Mammary epithelial cell (primary cell): ENCODE measurements at regions of chr16 and their contacts with region 1.

Region 1: DNA sequence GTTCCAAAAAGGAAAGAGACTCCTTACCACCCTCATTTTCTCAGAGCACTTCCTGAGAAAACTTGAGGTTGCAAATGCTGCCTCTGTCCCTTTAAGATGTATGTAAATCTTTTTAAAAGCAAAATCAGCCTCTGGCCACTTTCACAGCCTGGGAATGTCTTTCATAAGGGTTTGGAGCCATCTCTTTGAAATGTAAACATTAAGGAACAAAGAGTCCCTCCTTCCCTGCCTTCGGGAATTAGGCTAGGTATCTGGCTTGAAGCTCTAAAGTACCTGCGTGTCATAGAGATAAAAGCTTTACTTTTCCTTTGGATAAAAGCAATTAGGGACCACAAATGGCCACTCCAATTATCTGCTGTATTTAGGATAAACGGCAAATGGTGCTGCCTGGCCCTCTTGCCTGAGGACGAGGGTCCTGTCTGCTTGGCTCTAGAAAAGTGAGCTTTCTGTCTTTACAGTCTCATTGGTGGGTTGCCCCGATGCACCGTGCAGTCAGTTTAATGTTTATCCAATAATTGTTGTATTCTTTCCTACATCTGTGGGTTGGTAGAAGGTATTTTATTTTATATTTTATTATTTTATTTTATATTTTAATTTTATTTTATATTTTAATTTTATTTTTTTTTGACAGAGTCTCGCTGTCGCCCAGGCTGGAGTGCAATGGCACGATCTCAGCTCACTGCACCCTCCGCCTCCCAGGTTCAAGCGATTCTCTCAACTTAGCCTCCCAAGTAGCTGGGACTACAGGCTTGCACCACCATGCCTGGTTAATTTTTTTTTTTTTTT is 23.9 kb downstream of the NLRC3 start:
- DNase-seq: no peak
- H3K4me3 ChIP-seq: no peak overlapping the region
- H3K27ac ChIP-seq: no peak overlapping the region
- H3K4me1 ChIP-seq: no peaks in the 10 kb centered on the region
- H3K27me3 ChIP-seq: no peaks in the 10 kb centered on the region
- CTCF ChIP-seq: no peak

Region 2: DNA sequence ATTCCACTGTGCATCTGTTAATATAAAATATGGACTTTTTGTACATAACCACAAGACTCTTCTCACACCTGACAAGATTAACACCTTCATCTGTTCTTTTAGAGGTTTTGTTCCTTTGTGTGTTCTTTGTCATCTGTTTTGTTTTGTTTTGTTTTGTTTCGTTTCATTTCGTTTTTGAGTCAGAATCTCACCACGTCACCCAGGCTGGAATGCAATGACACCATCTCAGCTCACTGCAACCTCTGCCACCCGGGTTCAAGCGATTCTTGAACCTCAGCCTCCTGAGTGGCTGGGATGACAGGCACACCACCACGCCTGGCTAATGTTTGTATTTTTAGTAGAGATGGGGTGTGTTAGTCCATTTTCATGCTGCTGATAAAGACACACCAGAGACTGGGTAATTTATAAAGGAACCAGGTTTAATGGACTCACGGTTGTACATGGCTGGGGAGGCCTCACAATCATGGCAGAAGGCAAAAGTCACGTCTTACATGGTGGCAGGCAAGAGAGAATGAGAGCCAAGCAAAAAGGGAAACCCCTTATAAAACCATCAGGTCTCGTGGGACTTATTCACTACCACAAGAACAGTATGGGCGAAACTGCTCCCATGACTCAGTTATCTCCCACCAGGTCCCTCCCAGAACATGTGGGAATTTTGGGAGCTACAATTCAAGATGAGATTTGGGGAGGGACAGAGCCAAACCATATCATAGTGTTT is 80.3 kb before region 1 on chr16:
- CTCF ChIA-PET with region 1: no interaction called
- dilution Hi-C with region 1: no loop called
- in situ Hi-C with region 1: no loop called
- intact Hi-C with region 1: no loop called
- DNase-seq: no peak
- H3K4me3 ChIP-seq: no peak overlapping the region
- H3K27ac ChIP-seq: no peak overlapping the region
- H3K4me1 ChIP-seq: no peaks in the 10 kb centered on the region
- H3K27me3 ChIP-seq: no peaks in the 10 kb centered on the region
- CTCF ChIP-seq: no peak

Region 3: GRCh38 chr16:3509470-3509928 is 43.8 kb before region 1 on chr16:
- CTCF ChIA-PET with region 1: no interaction called
- dilution Hi-C with region 1: loop called (anchors 5 kb)
- in situ Hi-C with region 1: no loop called
- intact Hi-C with region 1: no loop called
- DNase-seq: peak; percentile 91
- H3K4me3 ChIP-seq: no peak overlapping the region
- H3K27ac ChIP-seq: peak overlapping the region; percentile 17
- H3K4me1 ChIP-seq: peaks cover 20% of the 10 kb centered on the region
- H3K27me3 ChIP-seq: no peaks in the 10 kb centered on the region
- CTCF ChIP-seq: no peak